ENCODE measurements at regions of chr10 and their contacts with region 1.

Region 1: GRCh38 chr10:114470956-114471905 is 66.9 kb upstream of the AFAP1L2 start:
- DNase-seq: peak; percentile 83
- ATAC-seq: peak; percentile 90
- H3K4me3 ChIP-seq: no peak overlapping the region
- H3K4me3 Mint-ChIP-seq: no peak overlapping the region
- H3K27ac ChIP-seq: no peak overlapping the region
- H3K27ac Mint-ChIP-seq: no peak overlapping the region
- H3K4me1 ChIP-seq: peaks cover 0 to 4% of the 10 kb centered on the region in 2 donors
- H3K4me1 Mint-ChIP-seq: peaks cover 25% of the 10 kb centered on the region
- H3K27me3 ChIP-seq: no peaks in the 10 kb centered on the region
- H3K27me3 Mint-ChIP-seq: no peaks in the 10 kb centered on the region
- CTCF ChIP-seq: peak; percentile 96

Region 2: GRCh38 chr10:114453576-114453975 is 17.7 kb before region 1 on chr10:
- CTCF ChIA-PET with region 1: interaction called, 20 read pairs
- POLR2A ChIA-PET with region 1: no interaction called
- intact Hi-C with region 1: no loop called
- DNase-seq: no peak
- ATAC-seq: no peak
- H3K4me3 ChIP-seq: no peak overlapping the region
- H3K4me3 Mint-ChIP-seq: no peak overlapping the region
- H3K27ac ChIP-seq: no peak overlapping the region
- H3K27ac Mint-ChIP-seq: no peak overlapping the region
- H3K4me1 ChIP-seq: no peaks in the 10 kb centered on the region
- H3K4me1 Mint-ChIP-seq: peaks cover 2% of the 10 kb centered on the region
- H3K27me3 ChIP-seq: no peaks in the 10 kb centered on the region
- H3K27me3 Mint-ChIP-seq: no peaks in the 10 kb centered on the region
- CTCF ChIP-seq: no peak

Region 3: GRCh38 chr10:114492351-114493037 is 21.3 kb after region 1 on chr10:
- CTCF ChIA-PET with region 1: interaction called, 49 read pairs
- POLR2A ChIA-PET with region 1: interaction called, 3 read pairs
- intact Hi-C with region 1: loop called (anchors 2 kb)
- DNase-seq: peak; percentile 19
- ATAC-seq: no peak
- H3K4me3 ChIP-seq: no peak overlapping the region
- H3K4me3 Mint-ChIP-seq: peak overlapping the region; percentile 67
- H3K27ac ChIP-seq: peak overlapping the region in 1 of 2 donors; percentile 4
- H3K27ac Mint-ChIP-seq: peak overlapping the region; percentile 71
- H3K4me1 ChIP-seq: peaks cover 38 to 47% of the 10 kb centered on the region in 2 donors
- H3K4me1 Mint-ChIP-seq: peaks cover 62% of the 10 kb centered on the region
- H3K27me3 ChIP-seq: no peaks in the 10 kb centered on the region
- H3K27me3 Mint-ChIP-seq: no peaks in the 10 kb centered on the region
- CTCF ChIP-seq: no peak

Region 4: GRCh38 chr10:114520453-114520852 is 49.2 kb after region 1 on chr10:
- CTCF ChIA-PET with region 1: interaction called, 43 read pairs
- POLR2A ChIA-PET with region 1: no interaction called
- intact Hi-C with region 1: no loop called
- DNase-seq: no peak
- ATAC-seq: no peak
- H3K4me3 ChIP-seq: no peak overlapping the region
- H3K4me3 Mint-ChIP-seq: peak overlapping the region; percentile 1
- H3K27ac ChIP-seq: no peak overlapping the region
- H3K27ac Mint-ChIP-seq: peak overlapping the region; percentile 38
- H3K4me1 ChIP-seq: peaks cover 82 to 90% of the 10 kb centered on the region in 2 donors
- H3K4me1 Mint-ChIP-seq: peaks cover 95% of the 10 kb centered on the region
- H3K27me3 ChIP-seq: no peaks in the 10 kb centered on the region
- H3K27me3 Mint-ChIP-seq: no peaks in the 10 kb centered on the region
- CTCF ChIP-seq: no peak

Region 5: GRCh38 chr10:114550756-114551635 is 79.8 kb after region 1 on chr10:
- CTCF ChIA-PET with region 1: interaction called, 212 read pairs
- POLR2A ChIA-PET with region 1: interaction called, 5 read pairs
- intact Hi-C with region 1: loop called (anchors 1 kb)
- DNase-seq: peak; percentile 50
- ATAC-seq: no peak
- H3K4me3 ChIP-seq: no peak overlapping the region
- H3K4me3 Mint-ChIP-seq: no peak overlapping the region
- H3K27ac ChIP-seq: no peak overlapping the region
- H3K27ac Mint-ChIP-seq: no peak overlapping the region
- H3K4me1 ChIP-seq: peaks cover under 1 to 25% of the 10 kb centered on the region in 2 donors
- H3K4me1 Mint-ChIP-seq: peaks cover 20% of the 10 kb centered on the region
- H3K27me3 ChIP-seq: no peaks in the 10 kb centered on the region
- H3K27me3 Mint-ChIP-seq: no peaks in the 10 kb centered on the region
- CTCF ChIP-seq: peak; percentile 74

Region 6: GRCh38 chr10:114703377-114704107 is 232.3 kb after region 1 on chr10:
- CTCF ChIA-PET with region 1: interaction called, 47 read pairs
- POLR2A ChIA-PET with region 1: no interaction called
- intact Hi-C with region 1: loop called (anchors 1 kb)
- DNase-seq: peak; percentile 48
- ATAC-seq: peak; percentile 54
- H3K4me3 ChIP-seq: no peak overlapping the region
- H3K4me3 Mint-ChIP-seq: no peak overlapping the region
- H3K27ac ChIP-seq: no peak overlapping the region
- H3K27ac Mint-ChIP-seq: no peak overlapping the region
- H3K4me1 ChIP-seq: no peaks in the 10 kb centered on the region
- H3K4me1 Mint-ChIP-seq: no peaks in the 10 kb centered on the region
- H3K27me3 ChIP-seq: peaks cover 0 to 8% (median 0%) of the 10 kb centered on the region in 4 experiments
- H3K27me3 Mint-ChIP-seq: peaks cover 13% of the 10 kb centered on the region
- CTCF ChIP-seq: peak; percentile 67

Region 7: GRCh38 chr10:115129752-115130151 is 658.5 kb after region 1 on chr10:
- CTCF ChIA-PET with region 1: no interaction called
- POLR2A ChIA-PET with region 1: no interaction called
- intact Hi-C with region 1: loop called (anchors 5 kb)
- DNase-seq: peak; percentile 38
- ATAC-seq: no peak
- H3K4me3 ChIP-seq: no peak overlapping the region
- H3K4me3 Mint-ChIP-seq: no peak overlapping the region
- H3K27ac ChIP-seq: no peak overlapping the region
- H3K27ac Mint-ChIP-seq: no peak overlapping the region
- H3K4me1 ChIP-seq: no peaks in the 10 kb centered on the region
- H3K4me1 Mint-ChIP-seq: no peaks in the 10 kb centered on the region
- H3K27me3 ChIP-seq: no peaks in the 10 kb centered on the region
- H3K27me3 Mint-ChIP-seq: peaks cover 7% of the 10 kb centered on the region
- CTCF ChIP-seq: peak; percentile 63